K562 (cell line): ENCODE measurements at regions of chr12 and their contacts with region 1.

Region 1: DNA sequence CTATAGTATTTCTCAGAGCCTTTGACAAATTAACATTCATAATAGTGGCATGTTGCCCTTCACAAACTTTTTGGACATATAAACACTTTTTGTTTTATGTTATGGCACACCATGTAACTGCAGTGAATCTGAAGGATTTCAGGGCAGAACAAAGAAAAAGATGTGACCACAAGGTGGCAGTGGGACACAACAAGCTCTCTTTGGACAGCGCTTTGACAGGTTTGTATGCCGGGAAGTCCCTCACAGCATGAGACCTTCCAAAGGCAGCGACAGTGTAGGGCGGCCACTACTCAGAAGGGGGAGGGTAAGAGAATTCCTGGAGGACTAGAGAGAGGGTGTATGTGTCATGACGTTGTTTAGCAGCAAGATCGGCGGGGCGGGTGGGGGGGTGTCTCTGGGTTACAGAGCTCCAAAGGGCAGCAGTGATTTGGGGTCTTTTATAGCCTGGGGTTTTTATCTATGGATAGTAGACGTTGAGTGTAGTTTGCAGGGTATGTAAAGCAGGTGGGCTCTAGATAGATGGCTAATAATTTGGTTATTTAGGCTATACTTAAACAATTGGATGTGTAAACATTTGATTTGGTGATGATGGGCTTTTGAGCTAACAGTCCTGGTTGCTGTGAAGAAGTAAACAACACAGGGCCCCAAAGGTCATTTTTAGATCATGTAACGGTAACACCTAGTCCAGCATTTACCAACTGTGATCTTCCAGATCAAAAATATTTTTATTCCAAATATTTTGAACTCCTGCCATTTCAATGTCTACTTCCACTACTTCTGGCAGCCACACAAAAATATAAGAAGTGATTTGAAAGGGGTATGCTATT is 22.9 kb downstream of the ETFBKMT start:
- DNase-seq: peak; percentile 72 to 92 (median 75)
- ATAC-seq: peak; percentile 100
- H3K4me3 ChIP-seq: no peak overlapping the region
- H3K27ac ChIP-seq: no peak overlapping the region
- H3K4me1 ChIP-seq: no peaks in the 10 kb centered on the region
- H3K27me3 ChIP-seq: no peaks in the 10 kb centered on the region
- CTCF ChIP-seq: peak; percentile 81 to 88 (median 86)
- EP300 ChIP-seq: peak; percentile 12; the same call in 1 of the 2 replicates
- POLR2A ChIP-seq: no peak
- RAD21 ChIP-seq: peak; percentile 97 to 99

Region 2: GRCh38 chr12:31813305-31813704 is 131.0 kb after region 1 on chr12:
- CTCF ChIA-PET with region 1: no interaction called
- POLR2A ChIA-PET with region 1: no interaction called
- in situ Hi-C with region 1: no loop called
- intact Hi-C with region 1: loop called (anchors 10 kb)
- DNase-seq: peak in 2 of 4 experiments; percentile 22
- ATAC-seq: peak; percentile 81
- H3K4me3 ChIP-seq: no peak overlapping the region
- H3K27ac ChIP-seq: no peak overlapping the region
- H3K4me1 ChIP-seq: peaks cover 0 to 4% of the 10 kb centered on the region in 2 experiments; a peak in 2 of 5 replicates
- H3K27me3 ChIP-seq: no peaks in the 10 kb centered on the region
- CTCF ChIP-seq: peak; percentile 18 to 38 (median 32); a peak in 3 of 6 replicates
- EP300 ChIP-seq: no peak
- POLR2A ChIP-seq: no peak
- RAD21 ChIP-seq: peak in 1 of 2 experiments; percentile 43; a peak in 1 of 4 replicates

Region 3: GRCh38 chr12:31959161-31959700 is 276.9 kb after region 1 on chr12 and contains the start of gene RESF1:
- CTCF ChIA-PET with region 1: no interaction called
- POLR2A ChIA-PET with region 1: no interaction called
- in situ Hi-C with region 1: no loop called
- intact Hi-C with region 1: loop called (anchors 2 kb)
- DNase-seq: peak; percentile 85 to 94 (median 88)
- ATAC-seq: peak; percentile 95
- H3K4me3 ChIP-seq: peak within 1 kb of the TSS; percentile 62
- H3K27ac ChIP-seq: peak within 1 kb of the TSS; percentile 90
- H3K4me1 ChIP-seq: peaks cover 17 to 21% of the 10 kb centered on the region in 2 experiments; a peak in 4 of 5 replicates
- H3K27me3 ChIP-seq: no peaks in the 10 kb centered on the region
- CTCF ChIP-seq: no peak; a peak in 1 of 6 replicates
- EP300 ChIP-seq: peak; percentile 35; the same call in 1 of the 2 replicates
- POLR2A ChIP-seq: peak; percentile 74
- RAD21 ChIP-seq: peak; percentile 39 to 51
- polyA plus RNA-seq, gene RESF1: 21.5 to 30.1 TPM

Region 4: DNA sequence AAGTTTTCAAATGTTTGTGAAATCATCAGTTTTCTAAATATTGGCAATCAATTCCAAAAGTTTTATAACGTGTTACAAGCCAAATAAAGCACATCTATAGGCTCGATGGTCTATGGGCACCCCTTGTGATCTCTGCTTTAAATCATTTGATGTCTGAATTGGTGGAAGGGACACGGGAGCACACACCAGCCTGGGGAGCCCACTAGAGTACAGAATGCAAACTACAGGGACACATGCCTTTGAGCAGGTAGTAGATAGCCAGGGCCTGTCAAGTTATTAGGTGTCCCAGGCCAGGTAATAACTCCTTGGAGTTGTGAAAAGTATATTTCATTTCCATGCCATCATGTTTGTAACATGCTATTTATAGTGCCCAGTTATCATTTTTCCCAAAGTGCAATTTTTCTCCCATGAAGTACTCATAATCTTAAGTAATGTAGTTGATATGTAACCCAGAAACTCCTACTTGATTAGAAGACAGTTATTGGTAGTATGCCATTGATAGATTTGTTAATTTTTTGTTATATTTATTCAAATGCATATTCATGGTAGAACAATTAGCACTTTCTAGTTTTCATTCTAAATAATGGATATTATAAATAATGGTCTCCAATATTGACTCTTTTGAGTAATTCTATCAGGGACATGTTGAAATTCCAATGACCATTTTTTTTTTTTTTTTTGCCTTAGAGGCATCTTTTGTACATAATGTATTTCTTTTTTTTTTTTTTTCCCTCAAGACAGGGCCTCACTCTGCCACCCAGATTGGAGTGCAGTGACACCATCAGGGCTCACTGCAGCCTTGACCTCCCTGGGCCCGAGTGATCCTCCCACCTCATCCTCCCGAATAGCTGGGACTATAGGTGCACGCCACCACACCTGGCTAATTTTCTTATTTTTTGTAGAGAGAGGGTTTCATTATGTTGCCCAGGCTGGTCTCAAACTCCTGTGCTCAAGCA is 620.1 kb after region 1 on chr12:
- CTCF ChIA-PET with region 1: interaction called, 3 read pairs
- POLR2A ChIA-PET with region 1: no interaction called
- in situ Hi-C with region 1: loop called (anchors 10 kb)
- intact Hi-C with region 1: loop called (anchors 1 kb)
- DNase-seq: peak; percentile 19 to 54 (median 38)
- ATAC-seq: peak; percentile 94
- H3K4me3 ChIP-seq: no peak overlapping the region
- H3K27ac ChIP-seq: no peak overlapping the region
- H3K4me1 ChIP-seq: peaks cover 0 to 2% of the 10 kb centered on the region in 2 experiments; a peak in 1 of 5 replicates
- H3K27me3 ChIP-seq: no peaks in the 10 kb centered on the region
- CTCF ChIP-seq: peak; percentile 67 to 73 (median 70)
- EP300 ChIP-seq: no peak
- POLR2A ChIP-seq: no peak
- RAD21 ChIP-seq: peak; percentile 22 to 81; a peak in 3 of 4 replicates